HCT116 (cell line): ENCODE measurements at regions of chr5 and their contacts with region 1.

Region 1: DNA sequence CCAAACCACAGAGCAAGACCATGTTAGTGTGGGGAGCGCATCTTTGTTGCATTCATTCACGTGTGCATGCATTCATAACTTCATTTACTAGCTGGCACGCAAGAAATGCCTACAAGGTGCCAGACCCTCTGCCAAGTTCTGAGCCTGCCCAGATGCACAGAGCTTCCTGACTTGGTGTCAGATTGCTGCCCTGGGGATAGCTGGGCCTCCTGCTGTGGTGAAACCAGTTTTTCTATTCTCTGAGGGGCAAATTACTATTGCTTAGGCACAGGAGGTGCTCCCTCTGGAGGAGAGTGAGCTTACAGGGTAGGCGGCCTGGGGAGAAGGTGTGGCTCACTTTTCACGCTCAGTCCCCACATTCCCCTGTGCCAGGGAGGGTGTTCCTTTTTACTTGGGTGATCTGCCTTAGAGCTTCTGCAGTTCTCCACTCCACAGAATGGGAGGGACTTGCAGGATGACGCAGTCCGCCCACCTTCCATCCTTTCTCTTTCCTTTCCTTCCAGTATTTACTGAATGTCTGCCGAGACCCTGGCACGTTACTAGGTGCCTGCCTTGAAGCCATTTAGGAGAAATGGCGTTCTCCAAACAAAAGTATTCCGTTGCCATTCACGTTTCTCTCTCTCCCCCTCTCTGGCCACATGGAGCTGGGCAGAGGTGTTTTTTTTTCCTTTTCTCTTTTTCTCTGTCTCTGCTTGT is 27.9 kb upstream of the CTNNA1 start:
- DNase-seq: peak; percentile 86
- ATAC-seq: peak; percentile 99
- H3K4me3 ChIP-seq: peak overlapping the region in 1 of 2 experiments; percentile 28; a peak in 2 of 4 replicates
- H3K27ac ChIP-seq: peak overlapping the region; percentile 69
- H3K4me1 ChIP-seq: peaks cover 19 to 22% of the 10 kb centered on the region in 2 experiments
- H3K27me3 ChIP-seq: no peaks in the 10 kb centered on the region
- CTCF ChIP-seq: peak; percentile 65 to 74 (median 71); a peak in 5 of 6 replicates
- POLR2A ChIP-seq: no peak
- RAD21 ChIP-seq: peak; percentile 78

Region 2: GRCh38 chr5:138702308-138703077 is 22.8 kb before region 1 on chr5:
- CTCF ChIA-PET with region 1: interaction called, 15 read pairs
- POLR2A ChIA-PET with region 1: interaction called, 5 read pairs
- RAD21 ChIA-PET with region 1: no interaction called
- intact Hi-C with region 1: loop called (anchors 2 kb)
- DNase-seq: peak; percentile 39
- ATAC-seq: peak; percentile 73
- H3K4me3 ChIP-seq: no peak overlapping the region
- H3K27ac ChIP-seq: no peak overlapping the region
- H3K4me1 ChIP-seq: peaks cover 2 to 22% of the 10 kb centered on the region in 2 experiments; a peak in 2 of 4 replicates
- H3K27me3 ChIP-seq: no peaks in the 10 kb centered on the region
- CTCF ChIP-seq: peak in 1 of 3 experiments; percentile 36; a peak in 1 of 6 replicates
- POLR2A ChIP-seq: no peak
- RAD21 ChIP-seq: peak; percentile 37

Region 3: GRCh38 chr5:138737494-138738265 is 12.4 kb after region 1 on chr5:
- CTCF ChIA-PET with region 1: interaction called, 8 read pairs
- POLR2A ChIA-PET with region 1: interaction called, 14 read pairs
- RAD21 ChIA-PET with region 1: no interaction called
- intact Hi-C with region 1: no loop called
- DNase-seq: no peak
- ATAC-seq: no peak
- H3K4me3 ChIP-seq: no peak overlapping the region
- H3K27ac ChIP-seq: no peak overlapping the region
- H3K4me1 ChIP-seq: peaks cover 9 to 23% of the 10 kb centered on the region in 2 experiments
- H3K27me3 ChIP-seq: no peaks in the 10 kb centered on the region
- CTCF ChIP-seq: no peak
- POLR2A ChIP-seq: no peak
- RAD21 ChIP-seq: no peak